ENCODE measurements at regions of chr5 and their contacts with region 1.

Region 1: GRCh38 chr5:134140530-134141201 is 26.2 kb downstream of the TCF7 start:
- DNase-seq: peak; percentile 77
- ATAC-seq: peak; percentile 73
- H3K4me3 ChIP-seq: no peak overlapping the region
- H3K4me3 Mint-ChIP-seq: no peak overlapping the region
- H3K27ac ChIP-seq: no peak overlapping the region
- H3K27ac Mint-ChIP-seq: peak overlapping the region; percentile 69
- H3K4me1 ChIP-seq: peaks cover 5 to 34% of the 10 kb centered on the region in 2 donors
- H3K4me1 Mint-ChIP-seq: peaks cover 33% of the 10 kb centered on the region
- H3K27me3 ChIP-seq: no peaks in the 10 kb centered on the region
- H3K27me3 Mint-ChIP-seq: no peaks in the 10 kb centered on the region
- CTCF ChIP-seq: peak; percentile 89

Region 2: DNA sequence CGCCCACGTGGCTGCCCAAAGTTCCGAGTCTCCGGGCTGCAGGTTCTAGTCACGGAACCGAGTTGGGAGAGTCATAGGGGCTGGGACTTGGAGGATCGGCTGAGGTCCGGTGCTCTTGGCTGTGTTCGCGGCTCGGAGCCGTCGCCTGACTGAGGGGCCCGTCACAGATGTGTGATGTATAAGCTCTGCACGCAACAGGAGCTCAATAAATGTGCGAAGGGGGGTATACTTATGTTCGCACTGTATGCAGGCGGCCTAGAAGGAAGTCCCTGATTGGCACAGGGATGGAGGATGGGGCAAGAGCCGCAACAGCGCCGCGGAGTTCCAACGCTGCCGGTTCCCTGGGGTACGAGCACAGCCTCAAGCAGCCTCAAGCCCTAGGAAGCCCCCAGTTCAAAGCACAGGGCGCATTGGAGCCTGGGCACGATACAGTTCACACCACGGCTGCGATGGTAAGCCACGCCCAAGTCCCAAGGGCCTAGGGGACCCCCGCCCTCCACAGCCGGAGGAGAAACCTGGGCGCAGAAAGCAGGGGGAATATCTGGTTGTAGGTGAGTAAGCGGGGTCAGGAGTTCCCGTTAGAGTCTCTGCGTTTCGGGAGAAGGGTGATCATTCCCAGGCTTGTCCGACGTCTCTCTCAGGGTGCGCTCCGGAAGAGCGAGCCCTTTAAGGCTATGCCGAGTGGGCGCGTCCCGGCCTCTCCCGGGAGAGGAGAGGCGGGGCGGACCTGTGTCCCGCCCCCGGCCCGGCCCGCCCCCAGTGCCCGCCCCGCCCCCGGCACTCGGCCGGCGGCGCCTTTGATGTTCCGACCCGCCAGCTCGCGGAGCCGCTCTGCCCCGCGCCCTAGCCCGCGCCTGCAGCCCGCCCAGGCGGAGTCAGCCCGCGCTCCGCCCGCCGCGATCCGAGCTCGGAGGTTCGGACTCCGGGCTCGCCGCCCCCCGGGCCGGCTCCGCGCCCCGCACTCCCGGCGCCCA is 26.5 kb before region 1 on chr5 and contains the start of gene TCF7:
- CTCF ChIA-PET with region 1: interaction called, 14 read pairs
- POLR2A ChIA-PET with region 1: interaction called, 3 read pairs
- intact Hi-C with region 1: no loop called
- DNase-seq: peak; percentile 86
- ATAC-seq: peak; percentile 89
- H3K4me3 ChIP-seq: peak within 1 kb of the TSS; percentile 64 to 84 (median 82)
- H3K4me3 Mint-ChIP-seq: peak within 1 kb of the TSS; percentile 90
- H3K27ac ChIP-seq: peak within 1 kb of the TSS in 1 of 2 donors; percentile 36
- H3K27ac Mint-ChIP-seq: peak within 1 kb of the TSS; percentile 78
- H3K4me1 ChIP-seq: peaks cover 13 to 32% of the 10 kb centered on the region in 2 donors
- H3K4me1 Mint-ChIP-seq: peaks cover 19% of the 10 kb centered on the region
- H3K27me3 ChIP-seq: peaks cover 0 to 38% (median 16%) of the 10 kb centered on the region in 4 experiments
- H3K27me3 Mint-ChIP-seq: peaks cover 14% of the 10 kb centered on the region
- CTCF ChIP-seq: no peak
- total RNA-seq, gene TCF7: 58.8 and 61.1 TPM in 2 replicates

Region 3: DNA sequence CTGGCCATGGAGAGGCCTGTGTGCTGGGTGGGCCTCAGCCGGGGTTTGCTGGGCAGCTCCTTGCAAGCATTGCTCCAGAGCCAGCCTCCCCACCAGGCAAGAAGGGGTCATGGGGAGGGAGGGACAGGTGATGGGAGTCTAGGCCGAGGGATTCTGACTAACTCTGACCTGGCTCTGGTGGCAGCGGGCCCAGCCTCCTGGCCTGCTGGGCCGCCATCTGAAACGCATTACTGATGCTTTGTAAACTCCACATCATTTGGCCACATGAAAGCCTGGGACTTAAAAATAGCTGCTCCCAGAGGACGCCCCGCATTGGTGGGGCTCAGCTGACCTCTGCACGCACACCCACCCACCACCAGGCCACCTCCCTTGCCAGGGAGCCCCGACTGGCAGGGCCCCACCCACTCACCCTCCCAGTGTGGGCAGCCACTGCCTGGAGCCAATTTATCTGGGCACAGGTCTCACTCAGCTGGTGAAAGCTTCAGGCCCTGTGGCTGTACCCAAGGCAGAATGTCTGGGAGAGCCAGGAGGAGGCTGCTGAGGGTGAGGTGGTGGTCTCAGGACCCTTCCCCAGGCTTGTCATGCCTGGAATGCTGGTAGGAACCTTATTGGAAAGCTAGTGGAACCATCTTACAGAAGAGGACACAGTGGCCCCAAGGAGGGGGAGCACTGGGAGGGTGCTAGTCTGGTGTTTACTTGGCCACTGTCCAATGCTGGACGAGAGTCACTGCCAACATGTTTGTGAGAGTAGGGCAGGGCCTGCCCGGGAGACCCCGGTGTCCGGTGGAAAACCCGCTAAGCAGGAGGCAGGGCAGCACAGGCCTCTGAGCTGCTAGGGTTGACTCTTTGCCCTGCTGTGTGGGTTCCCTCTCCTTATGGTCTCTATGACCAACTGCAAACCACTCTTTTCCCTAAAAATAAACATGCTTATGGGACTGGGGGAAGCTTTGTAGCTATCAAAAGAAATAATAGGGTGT is 15.3 kb before region 1 on chr5:
- CTCF ChIA-PET with region 1: interaction called, 16 read pairs
- POLR2A ChIA-PET with region 1: interaction called, 3 read pairs
- intact Hi-C with region 1: no loop called
- DNase-seq: no peak
- ATAC-seq: no peak
- H3K4me3 ChIP-seq: no peak overlapping the region
- H3K4me3 Mint-ChIP-seq: no peak overlapping the region
- H3K27ac ChIP-seq: peak overlapping the region; percentile 28 to 55
- H3K27ac Mint-ChIP-seq: peak overlapping the region; percentile 59
- H3K4me1 ChIP-seq: peaks cover 33 to 72% of the 10 kb centered on the region in 2 donors
- H3K4me1 Mint-ChIP-seq: peaks cover 54% of the 10 kb centered on the region
- H3K27me3 ChIP-seq: no peaks in the 10 kb centered on the region
- H3K27me3 Mint-ChIP-seq: no peaks in the 10 kb centered on the region
- CTCF ChIP-seq: no peak

Region 4: DNA sequence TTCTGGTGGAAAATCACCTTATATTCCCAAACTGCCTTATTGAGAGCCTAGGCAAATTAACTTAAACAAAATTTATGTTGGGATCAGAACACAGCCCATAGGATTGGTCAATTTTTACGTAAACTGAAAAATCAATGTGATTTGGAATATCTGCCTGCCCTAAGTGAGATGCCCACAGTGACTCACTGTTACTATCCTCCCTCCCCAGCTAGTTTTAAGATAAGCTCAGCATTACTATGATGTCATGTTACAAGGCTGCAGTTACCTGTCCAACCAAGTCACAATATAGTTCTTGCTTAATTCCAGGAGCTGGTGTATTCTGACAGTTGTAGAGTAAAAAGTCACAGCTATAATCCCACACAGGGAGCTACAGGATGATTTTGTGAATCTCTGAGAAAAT is 13.0 kb after region 1 on chr5:
- CTCF ChIA-PET with region 1: interaction called, 38 read pairs
- POLR2A ChIA-PET with region 1: no interaction called
- intact Hi-C with region 1: no loop called
- DNase-seq: no peak
- ATAC-seq: no peak
- H3K4me3 ChIP-seq: no peak overlapping the region
- H3K4me3 Mint-ChIP-seq: no peak overlapping the region
- H3K27ac ChIP-seq: no peak overlapping the region
- H3K27ac Mint-ChIP-seq: no peak overlapping the region
- H3K4me1 ChIP-seq: no peaks in the 10 kb centered on the region
- H3K4me1 Mint-ChIP-seq: no peaks in the 10 kb centered on the region
- H3K27me3 ChIP-seq: no peaks in the 10 kb centered on the region
- H3K27me3 Mint-ChIP-seq: no peaks in the 10 kb centered on the region
- CTCF ChIP-seq: no peak

Region 5: GRCh38 chr5:135013947-135014570 is 873.4 kb after region 1 on chr5:
- CTCF ChIA-PET with region 1: no interaction called
- POLR2A ChIA-PET with region 1: no interaction called
- intact Hi-C with region 1: no loop called
- DNase-seq: no peak
- ATAC-seq: no peak
- H3K4me3 ChIP-seq: no peak overlapping the region
- H3K4me3 Mint-ChIP-seq: no peak overlapping the region
- H3K27ac ChIP-seq: no peak overlapping the region
- H3K27ac Mint-ChIP-seq: no peak overlapping the region
- H3K4me1 ChIP-seq: no peaks in the 10 kb centered on the region
- H3K4me1 Mint-ChIP-seq: no peaks in the 10 kb centered on the region
- H3K27me3 ChIP-seq: peaks cover 0 to 4% (median 0%) of the 10 kb centered on the region in 4 experiments
- H3K27me3 Mint-ChIP-seq: peaks cover 17% of the 10 kb centered on the region
- CTCF ChIP-seq: no peak

Measured in B cell (primary cell).